ENCODE measurements at regions of chr5 and their contacts with region 1.

Region 1: DNA sequence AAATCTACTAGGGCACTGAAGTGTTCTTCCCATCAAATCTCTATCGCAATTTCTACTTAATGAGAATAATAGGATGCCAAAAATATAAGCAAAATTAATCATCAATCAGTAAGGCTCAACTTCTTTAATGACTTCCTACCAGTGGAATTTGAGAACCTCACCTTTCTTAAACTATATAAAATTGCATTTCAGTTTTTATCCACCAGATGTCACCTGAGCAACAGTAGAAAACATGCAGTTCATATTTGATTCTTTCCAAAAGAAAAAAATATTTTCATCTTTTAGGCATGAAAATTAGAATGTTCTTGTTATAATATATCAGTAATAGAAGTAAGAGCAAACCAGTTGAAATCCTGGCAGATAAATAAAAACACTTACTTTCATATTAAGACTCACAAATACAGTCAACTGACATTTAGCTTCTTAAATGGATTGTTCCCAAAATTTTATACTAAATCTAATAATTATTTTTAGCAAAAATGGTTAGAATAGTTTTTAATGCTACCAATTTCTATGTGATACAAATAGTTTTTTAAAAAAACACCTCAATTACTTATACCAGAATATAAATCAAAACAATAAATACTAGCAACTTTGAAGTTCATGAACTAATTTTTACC is 13.4 kb upstream of the CCDC112 start:
- DNase-seq: peak; percentile 50
- H3K4me3 ChIP-seq: no peak overlapping the region
- H3K27ac ChIP-seq: no peak overlapping the region
- H3K4me1 ChIP-seq: no peaks in the 10 kb centered on the region
- CTCF ChIP-seq: peak; percentile 87

Region 2: DNA sequence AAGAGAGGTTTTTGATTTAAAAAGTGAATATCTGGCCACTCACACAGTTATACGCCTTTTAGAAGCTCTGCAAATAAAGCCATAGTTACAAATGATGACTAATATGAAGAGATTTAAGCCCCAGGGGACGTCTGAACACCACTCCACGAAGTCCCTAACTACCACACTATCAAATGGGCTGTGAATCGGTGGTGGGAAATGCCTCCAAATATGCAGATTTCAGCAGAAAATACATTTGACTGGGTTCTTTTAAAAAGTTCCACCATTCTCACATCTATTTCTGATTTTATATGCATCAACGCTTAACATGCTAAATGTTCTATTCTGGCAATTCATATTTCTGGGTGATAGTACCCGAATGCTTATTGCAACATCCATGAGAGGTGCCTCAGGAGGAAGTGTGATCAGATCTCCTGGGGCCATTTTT is 269.9 kb after region 1 on chr5:
- CTCF ChIA-PET with region 1: interaction called, 3 read pairs
- POLR2A ChIA-PET with region 1: no interaction called
- intact Hi-C with region 1: loop called (anchors 1 kb)
- DNase-seq: no peak
- H3K4me3 ChIP-seq: no peak overlapping the region
- H3K27ac ChIP-seq: no peak overlapping the region
- H3K4me1 ChIP-seq: no peaks in the 10 kb centered on the region
- CTCF ChIP-seq: no peak

Region 3: DNA sequence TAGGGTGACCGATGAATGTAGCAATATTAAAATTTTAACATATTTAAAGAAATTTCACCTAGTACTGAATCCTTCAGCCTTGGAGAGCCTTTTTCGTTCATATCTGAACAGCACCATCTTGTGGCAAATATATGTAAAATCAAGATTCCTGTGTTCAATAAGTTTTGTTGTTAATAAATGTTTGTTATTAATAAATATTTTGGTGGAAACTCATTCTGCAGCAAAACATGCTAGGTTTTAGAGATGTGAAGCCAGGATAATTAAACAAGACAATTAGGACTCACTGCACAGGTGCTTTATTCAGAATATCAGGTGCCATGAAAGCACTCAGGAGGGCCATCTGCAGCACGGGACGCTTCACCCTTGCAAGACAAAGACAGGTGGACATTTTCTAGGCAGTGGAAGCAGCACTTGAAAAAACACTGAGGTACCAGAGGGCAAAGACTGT is 276.8 kb after region 1 on chr5:
- CTCF ChIA-PET with region 1: no interaction called
- POLR2A ChIA-PET with region 1: no interaction called
- intact Hi-C with region 1: loop called (anchors 1 kb)
- DNase-seq: peak; percentile 44
- H3K4me3 ChIP-seq: no peak overlapping the region
- H3K27ac ChIP-seq: no peak overlapping the region
- H3K4me1 ChIP-seq: no peaks in the 10 kb centered on the region
- CTCF ChIP-seq: peak; percentile 85

Region 4: GRCh38 chr5:116068028-116068632 is 758.3 kb after region 1 on chr5:
- CTCF ChIA-PET with region 1: no interaction called
- POLR2A ChIA-PET with region 1: no interaction called
- intact Hi-C with region 1: loop called (anchors 10 kb)
- DNase-seq: peak; percentile 74
- H3K4me3 ChIP-seq: no peak overlapping the region
- H3K27ac ChIP-seq: no peak overlapping the region
- H3K4me1 ChIP-seq: no peaks in the 10 kb centered on the region
- CTCF ChIP-seq: peak; percentile 98